ENCODE measurements at regions of chr21 and their contacts with region 1.

Region 1: GRCh38 chr21:36319765-36320420 is at the start of gene MORC3:
- DNase-seq: peak; percentile 95 to 98
- ATAC-seq: peak; percentile 96 to 97
- H3K4me3 ChIP-seq: peak within 1 kb of the TSS; percentile 67 to 87 (median 80)
- H3K27ac ChIP-seq: peak within 1 kb of the TSS; percentile 88 to 99 (median 94)
- H3K4me1 ChIP-seq: peaks cover 27 to 41% of the 10 kb centered on the region in 2 donors
- H3K27me3 ChIP-seq: no peaks in the 10 kb centered on the region
- CTCF ChIP-seq: no peak
- POLR2A ChIP-seq: peak; percentile 93 to 96
- total RNA-seq, gene MORC3: 28.1 to 35.5 (median 31.7) TPM

Region 2: GRCh38 chr21:36141513-36141925 is 178.4 kb before region 1 on chr21:
- in situ Hi-C with region 1: loop called in 2 of 4 experiments (anchors 10 kb)
- intact Hi-C with region 1: no loop called
- DNase-seq: peak; percentile 77 to 85
- ATAC-seq: peak; percentile 94 to 98
- H3K4me3 ChIP-seq: no peak overlapping the region
- H3K27ac ChIP-seq: no peak overlapping the region
- H3K4me1 ChIP-seq: peaks cover 0 to under 1% of the 10 kb centered on the region in 2 donors
- H3K27me3 ChIP-seq: no peaks in the 10 kb centered on the region
- CTCF ChIP-seq: peak; percentile 79 to 87 (median 85)
- POLR2A ChIP-seq: no peak

Region 3: DNA sequence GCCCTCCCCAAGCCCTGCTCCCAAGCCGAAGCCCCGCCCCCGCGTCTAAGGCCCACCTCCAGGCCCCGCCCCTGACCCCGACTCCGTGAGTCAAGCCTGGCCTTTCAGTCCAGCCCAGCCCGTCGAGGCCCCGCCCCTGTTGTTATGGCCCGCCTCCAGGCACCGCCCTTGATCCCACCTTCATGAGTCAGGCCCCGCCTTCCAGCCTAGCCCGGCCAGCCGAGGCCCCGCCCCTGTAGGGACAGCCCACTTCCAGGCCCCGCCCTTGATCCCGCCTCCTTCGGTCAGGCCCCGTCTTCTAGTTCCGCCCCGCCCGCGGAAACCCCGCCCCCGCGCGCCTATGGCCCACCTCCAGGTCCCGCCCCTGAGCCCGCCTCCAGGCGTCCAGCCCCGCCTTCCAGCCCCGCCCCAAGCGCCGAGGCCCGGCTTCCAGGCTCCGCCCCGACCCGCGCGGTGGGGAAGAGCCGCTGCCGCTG is 163.5 kb before region 1 on chr21:
- in situ Hi-C with region 1: loop called in 1 of 4 experiments (anchors 10 kb)
- intact Hi-C with region 1: loop called (anchors 1 kb)
- DNase-seq: peak; percentile 99
- ATAC-seq: peak; percentile 81 to 83
- H3K4me3 ChIP-seq: peak overlapping the region; percentile 73 to 99 (median 82)
- H3K27ac ChIP-seq: peak overlapping the region; percentile 87 to 96 (median 91)
- H3K4me1 ChIP-seq: peaks cover 15 to 17% of the 10 kb centered on the region in 2 donors
- H3K27me3 ChIP-seq: no peaks in the 10 kb centered on the region
- CTCF ChIP-seq: no peak
- POLR2A ChIP-seq: no peak

Region 4: DNA sequence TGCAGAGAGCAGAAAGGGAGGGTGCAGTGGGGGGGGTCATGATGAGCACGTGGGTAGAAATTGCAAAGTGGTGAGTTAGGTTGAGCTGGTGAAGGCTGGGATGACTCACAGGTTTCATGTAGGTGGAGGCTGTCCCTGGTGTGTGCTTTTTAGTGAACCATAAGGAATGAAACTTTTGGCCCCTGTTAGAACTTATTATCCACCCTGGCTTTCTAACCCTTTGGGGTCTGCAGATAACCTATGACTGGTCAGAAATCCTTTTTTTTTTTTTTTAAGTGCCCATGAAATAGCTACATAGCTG is 116.3 kb before region 1 on chr21:
- in situ Hi-C with region 1: no loop called
- intact Hi-C with region 1: loop called (anchors 2 kb)
- DNase-seq: peak; percentile 51 to 55
- ATAC-seq: peak; percentile 44 to 48
- H3K4me3 ChIP-seq: no peak overlapping the region
- H3K27ac ChIP-seq: peak overlapping the region; percentile 85 to 92 (median 90)
- H3K4me1 ChIP-seq: peaks cover 29 to 40% of the 10 kb centered on the region in 2 donors
- H3K27me3 ChIP-seq: no peaks in the 10 kb centered on the region
- CTCF ChIP-seq: no peak
- POLR2A ChIP-seq: no peak

Region 5: DNA sequence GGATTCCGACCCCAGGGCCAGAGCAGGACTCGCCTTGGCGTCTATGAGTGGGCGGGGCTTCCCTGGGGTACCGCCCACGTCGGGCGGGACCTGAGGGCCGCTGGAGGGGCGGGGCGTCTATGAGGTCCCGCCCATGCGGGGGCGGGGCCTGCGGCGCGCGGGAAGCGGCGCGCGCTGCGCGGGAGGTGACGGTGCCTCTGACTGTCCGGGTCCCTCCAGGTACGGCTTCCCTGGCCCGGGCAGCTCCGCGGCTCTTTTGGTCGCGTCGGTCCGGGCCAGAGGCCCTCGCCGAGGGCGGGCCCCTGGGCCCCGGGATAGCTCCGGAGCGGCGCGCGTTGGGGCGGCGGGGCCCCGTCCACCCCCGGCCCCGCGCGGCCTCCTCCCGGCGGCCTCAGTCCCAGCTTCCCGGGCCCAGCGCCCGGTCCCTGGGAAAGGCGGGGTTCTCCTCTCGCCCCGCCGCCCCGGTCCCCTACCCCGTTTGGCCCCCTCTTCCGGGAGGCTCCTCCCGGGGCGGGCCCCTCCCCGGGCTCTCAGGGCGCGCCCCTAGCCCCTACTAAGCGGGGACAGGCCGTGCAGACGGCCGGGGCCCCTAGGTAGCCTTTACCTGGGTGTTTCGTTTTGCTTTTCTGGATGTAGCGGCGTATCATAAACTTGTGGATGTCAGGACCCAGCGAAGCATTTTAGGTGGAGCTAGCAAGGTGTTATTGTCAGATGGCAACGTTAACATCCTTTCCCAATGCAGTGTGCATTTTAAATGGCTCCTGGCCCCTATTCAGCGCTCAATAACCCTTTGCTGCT is 65.5 kb after region 1 on chr21 and contains the start of gene CHAF1B:
- in situ Hi-C with region 1: no loop called
- intact Hi-C with region 1: loop called (anchors 2 kb)
- DNase-seq: peak; percentile 56 to 81
- ATAC-seq: peak; percentile 66 to 71
- H3K4me3 ChIP-seq: peak within 1 kb of the TSS; percentile 61 to 89 (median 70)
- H3K27ac ChIP-seq: peak within 1 kb of the TSS; percentile 84 to 94 (median 90)
- H3K4me1 ChIP-seq: peaks cover 30 to 36% of the 10 kb centered on the region in 2 donors
- H3K27me3 ChIP-seq: no peaks in the 10 kb centered on the region
- CTCF ChIP-seq: no peak
- POLR2A ChIP-seq: peak; percentile 84 to 87
- total RNA-seq, gene CHAF1B: 2.5 to 20.2 (median 7.4) TPM

Region 6: DNA sequence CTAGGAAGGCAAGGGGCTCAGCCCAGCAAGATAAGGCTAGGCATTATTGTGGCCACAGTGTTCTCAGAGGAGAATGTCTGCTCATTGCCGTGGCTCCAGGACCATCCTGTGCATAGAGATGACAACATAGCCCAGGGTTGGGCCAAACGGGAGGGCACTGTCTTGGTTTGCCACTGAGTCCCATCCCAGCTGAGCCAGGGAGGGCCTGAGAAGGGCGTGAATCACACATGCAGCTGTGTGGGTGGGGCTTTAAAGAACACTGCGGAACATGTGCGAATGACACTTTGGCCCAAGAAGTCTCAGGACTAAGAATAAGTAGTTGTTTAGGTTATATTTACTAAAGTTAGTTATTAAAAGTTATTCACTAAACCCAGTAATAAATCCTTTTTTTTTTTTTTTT is 83.8 kb after region 1 on chr21:
- in situ Hi-C with region 1: no loop called
- intact Hi-C with region 1: no loop called
- DNase-seq: no peak
- ATAC-seq: no peak
- H3K4me3 ChIP-seq: no peak overlapping the region
- H3K27ac ChIP-seq: no peak overlapping the region
- H3K4me1 ChIP-seq: no peaks in the 10 kb centered on the region
- H3K27me3 ChIP-seq: no peaks in the 10 kb centered on the region
- CTCF ChIP-seq: no peak
- POLR2A ChIP-seq: no peak

Region 7: GRCh38 chr21:36429947-36430546 is 110.2 kb after region 1 on chr21:
- in situ Hi-C with region 1: no loop called
- intact Hi-C with region 1: loop called (anchors 1 kb)
- DNase-seq: peak; percentile 97 to 98
- ATAC-seq: peak; percentile 91 to 94
- H3K4me3 ChIP-seq: peak overlapping the region; percentile 56 to 62 (median 58)
- H3K27ac ChIP-seq: peak overlapping the region; percentile 96 to 99 (median 97)
- H3K4me1 ChIP-seq: peaks cover 28 to 29% of the 10 kb centered on the region in 2 donors
- H3K27me3 ChIP-seq: no peaks in the 10 kb centered on the region
- CTCF ChIP-seq: peak in 1 of 5 experiments; percentile 41
- POLR2A ChIP-seq: peak; percentile 98